Heart left ventricle (tissue), 16 donors: ENCODE measurements at regions of chr10 and their contacts with region 1.

Region 1: DNA sequence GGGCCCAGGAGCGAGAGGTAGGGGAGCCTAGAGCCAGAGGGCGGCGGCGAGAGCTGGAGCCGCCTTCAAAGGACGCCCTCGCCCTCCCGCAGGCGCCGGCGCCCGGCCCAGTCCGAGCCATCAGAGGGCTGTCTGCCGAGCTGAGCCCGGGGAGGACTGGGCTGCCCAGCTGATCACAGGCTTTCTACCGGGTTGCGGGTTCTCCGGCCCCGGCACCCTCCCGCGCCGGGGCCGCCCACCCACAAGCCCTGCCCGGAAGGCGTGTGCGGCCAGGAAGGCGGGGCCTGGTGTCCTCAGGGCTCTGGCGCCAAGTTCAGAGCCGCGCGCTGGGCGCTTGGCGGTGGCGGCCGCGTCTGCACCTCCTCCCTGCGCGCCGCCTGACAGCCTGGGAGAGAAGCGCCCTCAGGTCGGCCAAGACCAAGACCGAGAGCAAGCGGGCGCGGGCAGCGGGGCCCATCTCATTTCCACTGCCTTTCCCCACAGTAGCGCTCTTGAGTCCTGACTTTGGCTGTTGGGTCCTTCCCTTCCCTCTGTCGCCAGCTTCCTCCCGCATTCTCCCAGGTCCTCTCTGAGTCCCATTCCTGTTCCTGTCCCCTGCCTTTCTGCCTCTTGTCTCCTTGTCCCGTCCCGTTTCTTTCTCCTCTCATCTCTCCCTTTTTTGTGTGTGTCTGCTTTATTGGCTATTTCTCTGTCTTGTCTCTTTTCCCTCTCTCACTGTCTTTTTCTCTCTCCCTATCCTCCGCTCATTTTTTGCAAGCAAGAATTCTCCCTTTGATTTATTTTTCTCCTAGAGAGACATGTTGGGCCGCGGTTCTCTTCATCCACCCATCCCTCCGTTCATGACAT is 60.6 kb upstream of the MSMB start:
- DNase-seq: peak; percentile 55 to 84 (median 58)
- ATAC-seq: peak; percentile 96 to 100 (median 99)
- H3K4me3 ChIP-seq: peak overlapping the region; percentile 14 to 64 (median 59)
- H3K27ac ChIP-seq: peak overlapping the region in 2 of 12 donors; percentile 1 to 29
- H3K4me1 ChIP-seq: peaks cover 0 to 9% (median 7%) of the 10 kb centered on the region in 12 donors
- H3K27me3 ChIP-seq: peaks cover 0 to 8% (median 0%) of the 10 kb centered on the region in 9 donors
- CTCF ChIP-seq: peak in 2 of 12 donors; percentile 8 to 29
- POLR2A ChIP-seq: no peak

Region 2: GRCh38 chr10:46035923-46036849 is 70.4 kb before region 1 on chr10:
- intact Hi-C with region 1: loop called in 1 of 10 experiments (anchors 2 kb)
- DNase-seq: no peak
- ATAC-seq: no peak
- H3K4me3 ChIP-seq: no peak overlapping the region
- H3K27ac ChIP-seq: no peak overlapping the region
- H3K4me1 ChIP-seq: no peaks in the 10 kb centered on the region
- H3K27me3 ChIP-seq: peaks cover 0 to 8% (median 0%) of the 10 kb centered on the region in 9 donors
- CTCF ChIP-seq: no peak
- POLR2A ChIP-seq: no peak

Region 3: GRCh38 chr10:46069771-46070463 is 36.7 kb before region 1 on chr10:
- intact Hi-C with region 1: no loop called
- DNase-seq: no peak
- ATAC-seq: no peak
- H3K4me3 ChIP-seq: no peak overlapping the region
- H3K27ac ChIP-seq: no peak overlapping the region
- H3K4me1 ChIP-seq: no peaks in the 10 kb centered on the region
- H3K27me3 ChIP-seq: no peaks in the 10 kb centered on the region
- CTCF ChIP-seq: no peak
- POLR2A ChIP-seq: no peak

Region 4: DNA sequence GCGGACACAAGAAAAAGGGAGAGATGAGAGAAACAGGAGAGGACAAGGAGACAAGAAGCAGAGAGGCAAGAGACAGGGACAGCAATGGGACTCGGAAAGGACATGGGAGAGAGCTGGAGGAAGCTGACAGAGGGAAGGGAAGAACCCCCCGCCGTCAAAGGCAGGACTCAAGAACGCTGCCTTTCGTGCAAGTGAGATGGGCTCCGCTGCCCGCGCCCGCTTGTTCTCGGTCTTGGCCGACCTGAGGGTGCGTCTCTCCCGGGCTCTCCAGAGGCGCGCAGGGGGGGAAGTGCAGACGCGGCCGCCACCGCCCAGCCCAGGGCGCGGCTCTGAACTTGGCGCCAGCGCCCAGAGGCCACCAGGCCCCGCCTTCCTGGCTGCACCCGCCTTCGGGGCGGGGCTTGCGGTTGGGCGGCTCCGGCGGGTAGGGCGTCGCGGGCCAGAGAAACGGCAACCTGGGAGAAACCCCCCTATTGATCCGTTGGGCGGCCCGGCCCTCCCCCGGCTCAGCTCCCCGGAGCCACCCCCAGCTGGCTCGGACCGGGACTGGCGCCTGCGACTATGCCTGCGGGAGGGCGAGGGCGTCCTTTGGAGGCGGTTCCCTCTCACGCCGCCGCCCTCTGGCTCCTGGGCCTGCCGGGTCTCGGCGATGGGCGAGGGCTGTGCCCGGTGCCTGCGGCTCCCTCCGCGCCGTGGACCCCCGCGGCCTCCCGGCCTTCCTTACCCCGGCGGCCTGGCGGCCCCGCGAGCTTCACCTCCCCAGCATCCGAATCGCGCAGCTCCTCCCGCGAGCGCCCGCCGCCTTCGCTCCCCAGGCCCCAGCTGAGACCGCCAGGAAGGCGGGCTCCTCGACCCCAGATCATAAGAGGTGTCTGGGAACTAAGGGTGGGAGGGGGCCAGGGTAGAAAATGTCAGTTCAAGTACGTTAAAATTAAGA is 177.9 kb after region 1 on chr10:
- intact Hi-C with region 1: loop called in 3 of 10 experiments (anchors 5 to 10 kb)
- DNase-seq: peak; percentile 85 to 92 (median 87)
- ATAC-seq: peak; percentile 83 to 96 (median 95)
- H3K4me3 ChIP-seq: peak overlapping the region; percentile 65 to 89 (median 74)
- H3K27ac ChIP-seq: peak overlapping the region in 10 of 12 donors; percentile 38 to 83 (median 68)
- H3K4me1 ChIP-seq: peaks cover 0 to 30% (median 15%) of the 10 kb centered on the region in 12 donors
- H3K27me3 ChIP-seq: peaks cover 0 to 2% (median 0%) of the 10 kb centered on the region in 9 donors
- CTCF ChIP-seq: no peak
- POLR2A ChIP-seq: peak in 1 of 2 donors; percentile 47

Region 5: DNA sequence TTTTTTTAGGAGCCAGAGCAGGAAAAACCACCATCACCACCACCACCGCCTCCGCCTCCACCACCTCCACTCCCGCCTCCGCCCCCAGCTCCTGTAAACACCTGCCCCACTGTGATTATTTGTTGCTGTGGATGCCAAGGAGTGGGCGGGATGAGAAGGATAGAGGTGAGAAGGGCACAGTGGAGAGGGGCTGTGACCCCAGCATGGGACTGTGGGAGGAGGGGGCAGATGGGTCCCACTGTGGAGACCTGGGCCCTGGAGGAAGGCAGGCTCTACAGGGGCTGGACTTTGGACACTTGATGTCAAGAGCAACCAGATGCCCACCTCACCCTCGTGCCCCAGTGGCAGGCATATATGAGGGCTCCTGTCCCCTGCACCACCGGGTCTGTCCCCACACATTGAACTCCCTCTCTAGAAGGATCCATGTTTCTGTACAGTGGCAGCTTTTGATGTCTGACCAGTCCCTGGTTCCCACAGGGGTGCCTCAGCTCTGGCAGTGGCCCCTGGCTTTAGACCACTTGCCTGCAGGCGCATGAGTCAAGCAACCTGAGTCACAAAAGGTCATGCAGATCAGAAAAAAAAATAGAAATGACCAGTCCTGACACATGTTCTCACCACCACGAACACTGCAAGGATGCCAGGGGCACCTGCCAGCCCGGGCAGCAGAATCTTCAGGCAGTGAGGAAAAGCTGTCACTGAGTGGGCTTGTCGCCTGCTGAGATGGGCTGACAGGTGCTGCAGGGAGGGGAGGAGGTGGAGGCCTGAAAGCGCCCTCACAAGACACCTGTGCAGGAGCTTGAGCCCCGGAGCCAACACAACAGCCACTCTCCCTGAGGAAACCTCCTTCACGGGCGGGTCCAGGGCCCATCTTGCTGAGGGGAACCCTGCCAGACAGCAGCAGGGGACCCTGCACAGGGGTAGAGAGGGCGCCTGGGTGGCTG is 205.1 kb after region 1 on chr10:
- intact Hi-C with region 1: no loop called
- DNase-seq: peak in 1 of 5 donors; percentile 10
- ATAC-seq: no peak
- H3K4me3 ChIP-seq: no peak overlapping the region
- H3K27ac ChIP-seq: no peak overlapping the region
- H3K4me1 ChIP-seq: peaks cover 0 to 4% (median 0%) of the 10 kb centered on the region in 12 donors
- H3K27me3 ChIP-seq: no peaks in the 10 kb centered on the region
- CTCF ChIP-seq: no peak
- POLR2A ChIP-seq: no peak

Region 6: GRCh38 chr10:47384148-47384921 is 1277.7 kb after region 1 on chr10 and contains the start of gene ZNF488:
- intact Hi-C with region 1: loop called in 1 of 10 experiments (anchors 10 kb)
- DNase-seq: peak; percentile 85 to 92 (median 85)
- ATAC-seq: peak; percentile 98 to 99 (median 98)
- H3K4me3 ChIP-seq: peak within 1 kb of the TSS; percentile 49 to 91 (median 76)
- H3K27ac ChIP-seq: peak within 1 kb of the TSS; percentile 14 to 86 (median 73)
- H3K4me1 ChIP-seq: peaks cover 0 to 14% (median 6%) of the 10 kb centered on the region in 12 donors
- H3K27me3 ChIP-seq: peaks cover 0 to 4% (median 0%) of the 10 kb centered on the region in 9 donors
- CTCF ChIP-seq: peak in 1 of 12 donors; percentile 10
- POLR2A ChIP-seq: peak in 1 of 2 donors; percentile 38
- total RNA-seq, gene ZNF488: 0.06 to 0.25 (median 0.11) TPM in 4 of 9 donors, not detected in the others